ENCODE measurements at regions of chr19 and their contacts with region 1.

Region 1: DNA sequence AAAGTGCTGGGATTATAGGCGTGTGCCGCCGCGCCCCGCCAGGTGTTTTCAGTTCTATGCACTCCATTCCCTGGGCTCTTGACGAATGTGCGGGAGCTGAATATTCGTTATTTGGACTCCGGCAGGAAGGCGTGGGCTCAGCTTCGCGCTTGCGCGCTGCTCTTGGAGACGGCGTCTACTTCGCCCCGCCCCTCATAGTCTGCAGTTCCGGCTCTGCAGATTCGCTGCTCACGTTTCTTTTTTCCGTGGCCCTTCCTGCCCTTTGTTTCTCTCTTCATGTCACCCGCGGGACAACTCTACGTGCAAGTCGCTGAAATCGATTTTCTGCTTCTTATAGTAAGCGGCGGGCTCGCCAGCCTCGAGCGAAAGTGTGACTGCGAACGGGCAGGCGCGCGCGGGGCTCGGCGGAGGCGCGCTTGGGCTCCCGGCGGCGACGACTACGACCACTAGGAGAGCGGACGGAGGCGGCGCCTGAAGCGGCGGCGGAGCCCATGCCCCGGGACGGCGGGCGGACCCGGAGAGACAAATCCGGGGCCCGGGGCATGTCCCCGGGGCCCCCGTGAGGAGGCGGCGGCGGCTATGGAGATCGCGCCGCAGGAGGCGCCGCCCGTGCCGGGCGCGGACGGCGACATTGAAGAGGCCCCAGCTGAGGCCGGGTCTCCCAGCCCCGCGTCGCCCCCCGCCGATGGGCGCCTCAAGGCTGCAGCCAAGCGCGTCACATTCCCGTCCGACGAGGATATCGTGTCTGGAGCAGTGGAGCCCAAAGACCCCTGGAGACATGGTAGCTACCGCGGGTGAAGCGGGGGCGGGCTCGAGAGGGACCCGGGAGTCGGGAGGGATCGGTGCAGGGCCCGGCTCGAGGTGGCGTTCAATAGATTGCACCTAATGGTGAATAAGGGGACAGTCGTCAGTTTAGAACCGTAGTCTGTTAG is at the start of gene PPP1R37:
- DNase-seq: peak; percentile 93
- ATAC-seq: peak; percentile 79
- H3K4me3 Mint-ChIP-seq: peak within 1 kb of the TSS; percentile 89
- H3K27ac Mint-ChIP-seq: peak within 1 kb of the TSS; percentile 96
- H3K4me1 Mint-ChIP-seq: peaks cover 53% of the 10 kb centered on the region
- H3K27me3 Mint-ChIP-seq: no peaks in the 10 kb centered on the region
- CTCF ChIP-seq: peak; percentile 41
- total RNA-seq, gene PPP1R37: 20.9 to 21.2 TPM

Region 2: GRCh38 chr19:45079063-45079910 is 13.7 kb before region 1 on chr19 and contains the start of gene GEMIN7:
- CTCF ChIA-PET with region 1: interaction called, 14 read pairs
- POLR2A ChIA-PET with region 1: interaction called, 18 read pairs
- intact Hi-C with region 1: no loop called
- DNase-seq: peak; percentile 84
- ATAC-seq: peak; percentile 68
- H3K4me3 Mint-ChIP-seq: peak within 1 kb of the TSS; percentile 98
- H3K27ac Mint-ChIP-seq: peak within 1 kb of the TSS; percentile 91
- H3K4me1 Mint-ChIP-seq: peaks cover 40% of the 10 kb centered on the region
- H3K27me3 Mint-ChIP-seq: no peaks in the 10 kb centered on the region
- CTCF ChIP-seq: no peak
- total RNA-seq, gene GEMIN7: 44.1 to 46.8 TPM

Region 3: GRCh38 chr19:45103156-45103507 is 10.1 kb after region 1 on chr19:
- CTCF ChIA-PET with region 1: interaction called, 11 read pairs
- POLR2A ChIA-PET with region 1: interaction called, 8 read pairs
- intact Hi-C with region 1: no loop called
- DNase-seq: peak; percentile 68
- ATAC-seq: peak; percentile 82
- H3K4me3 Mint-ChIP-seq: peak overlapping the region; percentile 42
- H3K27ac Mint-ChIP-seq: peak overlapping the region; percentile 43
- H3K4me1 Mint-ChIP-seq: peaks cover 47% of the 10 kb centered on the region
- H3K27me3 Mint-ChIP-seq: no peaks in the 10 kb centered on the region
- CTCF ChIP-seq: no peak

Region 4: GRCh38 chr19:45117669-45118068 is 24.7 kb after region 1 on chr19:
- CTCF ChIA-PET with region 1: interaction called, 11 read pairs
- POLR2A ChIA-PET with region 1: interaction called, 14 read pairs
- intact Hi-C with region 1: no loop called
- DNase-seq: peak; percentile 53
- ATAC-seq: peak; percentile 6
- H3K4me3 Mint-ChIP-seq: peak overlapping the region; percentile 44
- H3K27ac Mint-ChIP-seq: peak overlapping the region; percentile 63
- H3K4me1 Mint-ChIP-seq: peaks cover 84% of the 10 kb centered on the region
- H3K27me3 Mint-ChIP-seq: no peaks in the 10 kb centered on the region
- CTCF ChIP-seq: no peak

Region 5: DNA sequence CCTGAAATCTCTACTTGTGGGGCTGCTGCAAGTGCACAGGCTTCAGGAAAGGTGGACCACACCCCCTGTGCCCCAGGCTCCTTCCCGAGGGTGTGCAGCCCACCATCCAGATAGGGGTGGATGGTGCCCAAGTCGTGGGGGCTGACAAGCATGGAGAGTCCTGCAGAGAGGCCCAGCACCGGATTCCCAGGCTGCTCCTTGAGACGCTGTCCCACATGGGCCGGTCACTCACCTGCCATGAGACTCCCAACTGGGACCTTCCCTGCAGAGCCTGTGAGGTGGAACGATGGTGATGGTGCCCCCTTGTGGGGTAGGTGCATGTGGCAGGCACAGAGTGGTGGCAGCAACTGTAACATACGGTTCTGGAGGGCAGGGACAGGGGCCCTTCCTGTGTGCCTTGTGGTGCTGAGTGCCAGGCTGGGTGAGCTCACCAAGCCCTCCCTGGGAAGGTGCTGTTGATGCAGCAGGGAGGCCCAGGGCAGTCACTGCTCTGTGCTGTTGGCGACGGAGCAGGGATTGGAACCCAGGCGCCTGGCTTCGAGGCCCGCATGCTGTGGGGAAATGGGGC is 33.0 kb after region 1 on chr19:
- CTCF ChIA-PET with region 1: interaction called, 11 read pairs
- POLR2A ChIA-PET with region 1: interaction called, 4 read pairs
- intact Hi-C with region 1: no loop called
- DNase-seq: peak; percentile 89
- ATAC-seq: peak; percentile 87
- H3K4me3 Mint-ChIP-seq: no peak overlapping the region
- H3K27ac Mint-ChIP-seq: no peak overlapping the region
- H3K4me1 Mint-ChIP-seq: peaks cover 34% of the 10 kb centered on the region
- H3K27me3 Mint-ChIP-seq: no peaks in the 10 kb centered on the region
- CTCF ChIP-seq: peak; percentile 81

Region 6: GRCh38 chr19:45178262-45179071 is 85.5 kb after region 1 on chr19 and contains the start of gene BLOC1S3:
- CTCF ChIA-PET with region 1: interaction called, 10 read pairs
- POLR2A ChIA-PET with region 1: interaction called, 10 read pairs
- intact Hi-C with region 1: no loop called
- DNase-seq: peak; percentile 100
- ATAC-seq: peak; percentile 91
- H3K4me3 Mint-ChIP-seq: peak within 1 kb of the TSS; percentile 82
- H3K27ac Mint-ChIP-seq: peak within 1 kb of the TSS; percentile 91
- H3K4me1 Mint-ChIP-seq: peaks cover 32% of the 10 kb centered on the region
- H3K27me3 Mint-ChIP-seq: no peaks in the 10 kb centered on the region
- CTCF ChIP-seq: no peak
- total RNA-seq, gene BLOC1S3: 8.9 to 10.8 TPM